Natural killer cell (primary cell): ENCODE measurements at regions of chr5 and their contacts with region 1.

Region 1: GRCh38 chr5:141512390-141512910 is 23.6 kb downstream of the PCDHGC5 start:
- DNase-seq: peak; percentile 82 to 88
- ATAC-seq: peak; percentile 46 to 76 (median 67)
- H3K4me3 ChIP-seq: peak overlapping the region; percentile 22
- H3K4me3 Mint-ChIP-seq: peak overlapping the region; percentile 95
- H3K27ac ChIP-seq: no peak overlapping the region
- H3K27ac Mint-ChIP-seq: peak overlapping the region; percentile 74 to 82
- H3K4me1 ChIP-seq: peaks cover 70% of the 10 kb centered on the region
- H3K4me1 Mint-ChIP-seq: peaks cover 54 to 61% of the 10 kb centered on the region in 2 donors
- H3K27me3 ChIP-seq: no peaks in the 10 kb centered on the region
- H3K27me3 Mint-ChIP-seq: no peaks in the 10 kb centered on the region
- CTCF ChIP-seq: peak; percentile 94

Region 2: GRCh38 chr5:141326088-141326854 is 186.2 kb before region 1 on chr5:
- intact Hi-C with region 1: loop called (anchors 5 kb)
- DNase-seq: peak; percentile 52 to 81
- ATAC-seq: peak; percentile 64 to 94 (median 85)
- H3K4me3 ChIP-seq: peak overlapping the region; percentile 32
- H3K4me3 Mint-ChIP-seq: peak overlapping the region; percentile 92
- H3K27ac ChIP-seq: peak overlapping the region; percentile 22
- H3K27ac Mint-ChIP-seq: peak overlapping the region in 1 of 2 donors; percentile 92
- H3K4me1 ChIP-seq: peaks cover 8% of the 10 kb centered on the region
- H3K4me1 Mint-ChIP-seq: peaks cover 7 to 8% of the 10 kb centered on the region in 2 donors
- H3K27me3 ChIP-seq: peaks cover 15% of the 10 kb centered on the region
- H3K27me3 Mint-ChIP-seq: peaks cover 35 to 60% of the 10 kb centered on the region in 2 donors
- CTCF ChIP-seq: peak; percentile 67

Region 3: DNA sequence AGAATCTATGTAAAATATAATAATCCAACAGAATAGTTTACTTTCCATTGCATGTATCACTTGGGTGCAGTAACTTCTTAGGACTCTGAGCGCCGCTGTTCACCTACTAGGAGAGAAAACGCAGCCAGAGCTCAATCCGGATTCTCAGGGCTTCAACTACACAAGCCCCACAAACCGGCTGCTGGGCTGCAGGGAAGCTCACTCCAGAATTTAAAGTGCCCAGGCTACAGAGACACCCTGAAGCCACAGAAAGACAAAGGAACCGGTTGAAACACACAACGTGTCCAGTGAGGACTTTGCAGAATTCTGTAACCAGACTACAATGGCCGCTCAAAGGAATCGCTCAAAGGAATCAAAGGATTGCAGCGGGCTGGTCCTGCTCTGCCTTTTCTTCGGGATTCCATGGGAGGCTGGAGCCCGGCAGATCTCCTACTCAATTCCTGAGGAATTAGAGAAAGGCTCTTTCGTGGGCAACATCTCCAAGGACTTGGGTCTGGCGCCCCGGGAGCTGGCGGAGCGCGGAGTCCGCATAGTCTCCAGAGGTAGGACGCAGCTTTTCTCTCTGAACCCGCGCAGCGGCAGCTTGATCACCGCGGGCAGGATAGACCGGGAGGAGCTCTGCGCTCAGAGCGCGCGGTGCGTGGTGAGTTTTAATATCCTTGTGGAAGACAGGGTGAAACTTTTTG is 99.5 kb before region 1 on chr5 and contains the start of gene PCDHGA10:
- intact Hi-C with region 1: loop called (anchors 5 kb)
- DNase-seq: peak in 1 of 2 donors; percentile 73
- ATAC-seq: peak; percentile 63 to 67 (median 65)
- H3K4me3 ChIP-seq: peak within 1 kb of the TSS; percentile 22
- H3K4me3 Mint-ChIP-seq: peak within 1 kb of the TSS; percentile 93
- H3K27ac ChIP-seq: peak within 1 kb of the TSS; percentile 22
- H3K27ac Mint-ChIP-seq: peak within 1 kb of the TSS; percentile 61 to 82
- H3K4me1 ChIP-seq: peaks cover 27% of the 10 kb centered on the region
- H3K4me1 Mint-ChIP-seq: peaks cover 35 to 54% of the 10 kb centered on the region in 2 donors
- H3K27me3 ChIP-seq: peaks cover 68% of the 10 kb centered on the region
- H3K27me3 Mint-ChIP-seq: peaks cover 52 to 60% of the 10 kb centered on the region in 2 donors
- CTCF ChIP-seq: peak; percentile 63
- total RNA-seq, gene PCDHGA10: 0.61 to 2.6 (median 2.1) TPM